Activated CD4-positive, alpha-beta T cell treated with anti-CD3 and anti-CD28 coated beads for 36 hours (primary cell): ENCODE measurements at regions of chr10 and their contacts with region 1.

Region 1: DNA sequence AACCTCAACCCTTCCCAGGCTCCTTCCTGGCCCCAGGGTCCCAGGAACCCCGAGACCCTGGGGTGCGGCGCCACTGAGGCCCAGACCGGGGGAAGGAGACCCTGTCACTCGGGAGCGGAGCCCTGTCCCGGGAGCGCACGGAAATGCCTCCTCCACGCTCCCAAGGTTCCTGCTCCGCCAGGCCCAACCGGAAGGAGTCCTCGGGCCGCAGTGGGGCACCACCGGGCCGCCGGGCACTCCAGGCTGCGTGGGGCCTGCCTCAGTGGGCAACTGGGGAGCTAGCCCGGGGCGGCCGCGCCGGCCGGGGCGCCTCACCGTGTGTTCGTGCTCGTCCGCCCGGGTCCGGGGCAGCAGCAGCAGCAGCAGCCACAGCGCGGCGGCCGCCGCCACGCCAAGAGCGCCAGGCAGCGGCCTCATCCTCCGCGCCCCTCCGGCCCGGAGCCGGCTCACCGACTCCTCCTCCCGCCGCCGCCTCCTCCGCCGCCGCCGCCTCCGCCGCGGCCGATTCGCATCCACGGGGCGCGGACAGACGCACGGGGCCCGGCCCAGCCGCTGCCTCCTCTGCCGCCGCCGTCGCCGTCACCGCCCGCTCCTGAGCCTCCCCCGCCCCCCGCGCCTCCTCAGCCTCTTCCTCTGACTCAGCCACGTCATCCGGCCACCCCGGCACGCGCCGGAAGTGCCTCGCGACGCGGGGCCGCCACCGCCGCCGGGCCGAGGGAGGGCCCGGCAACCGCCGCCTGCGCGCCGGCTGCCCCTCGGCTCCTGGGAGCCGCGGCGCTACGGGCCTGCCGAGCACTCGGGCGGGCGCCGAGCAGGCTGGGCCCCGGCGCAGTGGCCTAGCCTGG is at the start of gene TM9SF3:
- DNase-seq: peak; percentile 97
- ATAC-seq: peak; percentile 64
- H3K4me3 Mint-ChIP-seq: no peak within 1 kb of the TSS
- H3K27ac Mint-ChIP-seq: peak within 1 kb of the TSS; percentile 92
- H3K4me1 Mint-ChIP-seq: peaks cover 33% of the 10 kb centered on the region
- H3K27me3 Mint-ChIP-seq: peaks cover 6% of the 10 kb centered on the region
- total RNA-seq, gene TM9SF3: 45.3 to 70.2 TPM

Region 2: DNA sequence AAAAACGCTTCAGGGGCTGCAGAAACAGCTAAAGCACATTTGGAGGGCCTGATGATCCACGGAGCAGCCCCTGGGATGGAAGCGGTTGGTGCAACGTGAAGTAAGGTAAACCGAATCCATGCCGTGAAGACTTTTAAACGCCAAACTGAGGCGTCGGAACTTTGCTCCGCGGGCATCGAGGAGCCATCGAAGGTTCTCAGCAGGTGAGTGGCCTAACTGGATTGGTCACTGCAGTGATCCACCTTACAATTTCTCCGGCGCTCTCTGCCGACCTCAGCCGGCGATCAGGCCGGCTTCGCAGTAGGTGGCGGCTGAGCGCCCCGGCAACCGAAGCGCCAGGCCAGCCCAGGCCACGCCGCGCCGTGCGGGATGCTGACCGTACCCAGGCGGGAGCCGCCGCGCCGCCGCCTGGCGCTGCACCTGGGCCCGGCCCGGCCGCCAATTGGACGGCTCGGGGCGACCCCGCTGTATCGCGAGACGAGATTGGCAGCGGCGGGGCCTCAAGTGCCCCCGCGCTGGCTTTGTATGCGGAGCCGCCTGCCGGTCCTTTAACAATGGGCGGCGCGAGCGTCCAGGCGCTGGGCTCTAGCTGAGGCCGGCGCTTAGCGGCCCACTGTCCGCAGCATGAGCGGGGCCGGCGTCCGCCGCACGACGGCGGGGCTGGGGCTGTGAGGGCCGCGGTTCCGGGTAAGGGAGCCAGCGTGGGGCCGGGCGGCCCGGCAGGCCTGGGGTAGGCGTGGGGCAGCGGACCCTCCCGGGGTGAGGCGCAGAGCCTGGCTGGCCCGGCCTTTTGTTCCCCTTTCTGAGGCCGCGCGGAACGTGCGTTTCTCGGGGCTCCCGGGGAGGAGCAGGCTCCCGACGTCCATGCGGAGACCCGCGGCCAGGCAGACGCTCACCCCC is 543.4 kb before region 1 on chr10 and contains the start of gene CCNJ:
- CTCF ChIA-PET with region 1: no interaction called
- POLR2A ChIA-PET with region 1: no interaction called
- intact Hi-C with region 1: loop called in 1 of 2 experiments (anchors 5 kb)
- DNase-seq: peak; percentile 90
- ATAC-seq: peak; percentile 93
- H3K4me3 Mint-ChIP-seq: peak within 1 kb of the TSS; percentile 93
- H3K27ac Mint-ChIP-seq: peak within 1 kb of the TSS; percentile 79
- H3K4me1 Mint-ChIP-seq: peaks cover 39% of the 10 kb centered on the region
- H3K27me3 Mint-ChIP-seq: no peaks in the 10 kb centered on the region
- total RNA-seq, gene CCNJ: 4.4 to 4.5 TPM

Region 3: GRCh38 chr10:96651998-96652431 is 65.4 kb after region 1 on chr10:
- CTCF ChIA-PET with region 1: no interaction called
- POLR2A ChIA-PET with region 1: no interaction called
- intact Hi-C with region 1: no loop called
- DNase-seq: peak; percentile 37
- ATAC-seq: peak; percentile 49
- H3K4me3 Mint-ChIP-seq: no peak overlapping the region
- H3K27ac Mint-ChIP-seq: no peak overlapping the region
- H3K4me1 Mint-ChIP-seq: peaks cover 33% of the 10 kb centered on the region
- H3K27me3 Mint-ChIP-seq: no peaks in the 10 kb centered on the region

Region 4: GRCh38 chr10:96695366-96695765 is 108.7 kb after region 1 on chr10:
- CTCF ChIA-PET with region 1: no interaction called
- POLR2A ChIA-PET with region 1: no interaction called
- intact Hi-C with region 1: loop called in 1 of 2 experiments (anchors 5 kb)
- DNase-seq: peak; percentile 33
- ATAC-seq: peak; percentile 76
- H3K4me3 Mint-ChIP-seq: no peak overlapping the region
- H3K27ac Mint-ChIP-seq: peak overlapping the region; percentile 76
- H3K4me1 Mint-ChIP-seq: peaks cover 28% of the 10 kb centered on the region
- H3K27me3 Mint-ChIP-seq: no peaks in the 10 kb centered on the region

Region 5: DNA sequence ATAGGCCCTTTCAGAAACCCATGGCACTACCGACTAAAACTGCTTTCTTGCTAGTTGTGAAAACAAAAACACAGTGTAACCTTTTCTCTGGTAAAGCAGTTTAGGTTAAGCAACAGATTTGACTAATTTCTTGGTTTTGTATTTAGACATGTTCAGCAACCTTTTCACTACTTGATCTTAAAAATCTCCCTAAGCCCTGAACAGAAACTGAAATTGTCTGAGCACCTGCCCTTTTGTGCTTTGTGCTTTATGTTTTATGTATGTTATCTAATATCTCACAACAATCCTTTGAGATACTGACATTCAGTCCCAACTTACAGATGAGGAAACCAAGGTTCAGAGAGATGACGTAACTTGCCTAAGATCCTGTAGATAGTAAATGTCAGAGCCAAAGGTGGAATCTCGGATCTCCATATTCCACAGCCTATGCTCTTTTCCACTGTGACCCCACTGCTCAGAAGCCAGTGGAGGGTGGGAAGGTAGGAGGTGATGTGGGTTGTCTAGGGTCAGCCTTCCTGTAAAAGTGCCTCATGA is 392.0 kb after region 1 on chr10:
- CTCF ChIA-PET with region 1: no interaction called
- POLR2A ChIA-PET with region 1: no interaction called
- intact Hi-C with region 1: loop called in 1 of 2 experiments (anchors 5 kb)
- DNase-seq: no peak
- ATAC-seq: peak; percentile 91
- H3K4me3 Mint-ChIP-seq: peak overlapping the region; percentile 12
- H3K27ac Mint-ChIP-seq: peak overlapping the region; percentile 85
- H3K4me1 Mint-ChIP-seq: peaks cover 21% of the 10 kb centered on the region
- H3K27me3 Mint-ChIP-seq: no peaks in the 10 kb centered on the region

Region 6: GRCh38 chr10:97334370-97335175 is 747.9 kb after region 1 on chr10 and contains the start of gene FRAT2:
- CTCF ChIA-PET with region 1: no interaction called
- POLR2A ChIA-PET with region 1: no interaction called
- intact Hi-C with region 1: loop called in 1 of 2 experiments (anchors 2 kb)
- DNase-seq: peak; percentile 91
- ATAC-seq: peak; percentile 85
- H3K4me3 Mint-ChIP-seq: peak within 1 kb of the TSS; percentile 83
- H3K27ac Mint-ChIP-seq: peak within 1 kb of the TSS; percentile 86
- H3K4me1 Mint-ChIP-seq: peaks cover 40% of the 10 kb centered on the region
- H3K27me3 Mint-ChIP-seq: no peaks in the 10 kb centered on the region
- total RNA-seq, gene FRAT2: 3.0 to 4.3 TPM

Region 7: DNA sequence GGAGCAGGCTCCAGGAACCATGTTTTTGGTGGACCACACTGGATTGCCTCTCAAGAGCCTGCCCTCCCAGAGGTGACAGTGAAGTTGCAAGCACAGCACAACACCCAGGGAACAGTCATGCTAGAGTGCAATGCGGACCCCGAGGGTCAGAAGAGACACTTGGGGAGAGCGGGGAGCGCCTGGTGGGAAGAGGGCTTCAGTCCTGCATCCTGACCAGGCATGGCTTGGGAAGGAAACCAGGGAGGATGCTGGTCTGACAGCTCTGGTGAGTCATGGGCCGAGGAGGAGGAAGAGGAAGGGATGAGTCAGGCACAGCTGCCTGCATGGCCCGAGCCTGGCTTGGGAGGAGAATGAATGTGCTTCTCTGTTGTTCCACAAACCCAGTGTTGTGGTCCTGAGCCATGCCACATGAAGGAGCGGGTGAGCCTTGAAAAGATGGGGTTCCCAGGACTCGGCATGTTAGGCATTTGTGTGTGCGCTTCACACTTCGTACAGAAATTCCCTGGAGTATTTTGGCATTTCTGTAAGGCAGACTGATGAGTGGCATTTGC is 956.5 kb after region 1 on chr10:
- CTCF ChIA-PET with region 1: no interaction called
- POLR2A ChIA-PET with region 1: no interaction called
- intact Hi-C with region 1: loop called in 1 of 2 experiments (anchors 2 kb)
- DNase-seq: peak; percentile 85
- ATAC-seq: peak; percentile 94
- H3K4me3 Mint-ChIP-seq: no peak overlapping the region
- H3K27ac Mint-ChIP-seq: peak overlapping the region; percentile 75
- H3K4me1 Mint-ChIP-seq: peaks cover 22% of the 10 kb centered on the region
- H3K27me3 Mint-ChIP-seq: no peaks in the 10 kb centered on the region